Activated naive CD4-positive, alpha-beta T cell treated with anti-CD3 and anti-CD28 coated beads for 36 hours (primary cell): ENCODE measurements at regions of chr14 and their contacts with region 1.

Region 1: GRCh38 chr14:24160850-24161804 is at the start of gene IRF9:
- DNase-seq: peak; percentile 99
- H3K4me3 Mint-ChIP-seq: peak within 1 kb of the TSS; percentile 99
- H3K27ac Mint-ChIP-seq: peak within 1 kb of the TSS; percentile 100
- H3K4me1 Mint-ChIP-seq: peaks cover 43% of the 10 kb centered on the region
- H3K27me3 Mint-ChIP-seq: no peaks in the 10 kb centered on the region
- total RNA-seq, gene IRF9: 202 to 212 TPM

Region 2: GRCh38 chr14:23984891-23985602 is 176.1 kb before region 1 on chr14:
- CTCF ChIA-PET with region 1: interaction called, 3 read pairs
- intact Hi-C with region 1: loop called (anchors 1 kb)
- DNase-seq: no peak
- H3K4me3 Mint-ChIP-seq: no peak overlapping the region
- H3K27ac Mint-ChIP-seq: no peak overlapping the region
- H3K4me1 Mint-ChIP-seq: peaks cover 26% of the 10 kb centered on the region
- H3K27me3 Mint-ChIP-seq: no peaks in the 10 kb centered on the region

Region 3: DNA sequence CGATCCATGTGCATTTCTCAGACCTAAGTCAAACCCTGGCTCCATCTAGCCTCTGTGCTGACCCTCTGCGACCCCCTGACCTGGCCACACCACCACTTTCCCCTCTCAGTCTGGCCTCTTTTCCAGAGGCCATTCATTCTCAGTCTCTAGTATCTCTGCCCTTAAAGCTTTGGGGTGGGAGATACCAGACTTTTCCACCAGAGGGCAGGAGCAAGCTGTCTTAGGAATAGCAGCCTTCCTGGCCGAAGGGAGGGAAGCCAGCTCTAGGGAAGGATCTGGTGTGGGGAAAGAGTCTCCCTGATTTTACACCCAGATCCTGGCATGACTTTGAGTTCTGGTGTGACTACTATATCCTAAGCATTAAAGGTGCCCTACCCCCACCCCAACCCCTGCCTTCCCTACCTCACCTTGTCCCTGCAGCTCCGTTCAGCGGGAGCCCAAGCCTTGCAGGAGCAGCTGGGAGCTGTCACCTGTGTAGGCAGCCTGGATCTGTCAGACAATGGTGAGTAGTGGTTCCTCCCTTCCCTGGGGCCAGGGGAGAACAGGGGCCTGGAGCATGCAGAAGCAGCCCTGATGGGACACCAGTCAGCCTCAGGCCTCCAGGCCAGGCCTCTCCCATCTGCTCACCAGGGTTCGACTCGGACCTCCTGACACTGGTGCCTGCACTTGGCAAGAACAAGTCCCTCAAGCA is 102.7 kb before region 1 on chr14:
- CTCF ChIA-PET with region 1: interaction called, 25 read pairs
- intact Hi-C with region 1: loop called (anchors 1 kb)
- DNase-seq: peak; percentile 89
- H3K4me3 Mint-ChIP-seq: no peak overlapping the region
- H3K27ac Mint-ChIP-seq: peak overlapping the region; percentile 38
- H3K4me1 Mint-ChIP-seq: peaks cover 5% of the 10 kb centered on the region
- H3K27me3 Mint-ChIP-seq: peaks cover 2% of the 10 kb centered on the region

Region 4: DNA sequence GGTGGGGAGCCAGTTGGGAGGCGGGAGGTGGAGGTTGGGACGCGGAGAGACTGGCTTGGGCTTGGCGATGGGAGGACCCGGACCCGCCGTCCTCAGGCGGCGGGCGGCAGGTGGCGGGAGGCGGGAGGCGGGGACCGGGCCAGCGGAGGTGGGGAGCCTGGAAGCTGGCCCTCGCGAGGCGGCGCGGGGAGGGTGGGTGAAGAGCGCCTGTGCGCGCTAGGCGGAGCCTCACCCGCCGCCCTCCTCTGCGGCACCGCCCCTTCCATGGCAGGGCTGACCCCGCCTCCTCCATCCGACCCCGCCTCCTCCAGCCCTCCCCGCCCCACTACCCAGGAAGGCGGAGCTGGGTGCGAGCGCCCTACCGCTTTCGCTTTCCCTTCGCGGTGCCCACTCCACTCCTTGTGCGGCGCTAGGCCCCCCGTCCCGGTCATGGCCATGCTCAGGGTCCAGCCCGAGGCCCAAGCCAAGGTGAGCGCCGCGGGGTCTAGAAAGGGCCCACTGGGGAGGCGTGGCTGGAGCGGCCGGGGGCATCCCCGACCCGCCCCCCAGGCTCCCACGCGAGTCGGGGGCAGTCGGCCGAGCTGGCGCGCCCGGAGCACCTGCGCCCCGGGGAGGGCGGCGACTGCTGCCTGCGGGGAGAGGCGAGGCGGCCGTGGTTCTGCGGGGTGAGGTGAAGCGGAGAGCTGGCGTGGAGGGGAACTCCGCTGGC is 25.1 kb before region 1 on chr14 and contains the start of gene PSME1:
- CTCF ChIA-PET with region 1: interaction called, 22 read pairs
- intact Hi-C with region 1: loop called (anchors 1 kb)
- DNase-seq: peak; percentile 97
- H3K4me3 Mint-ChIP-seq: peak within 1 kb of the TSS; percentile 86
- H3K27ac Mint-ChIP-seq: peak within 1 kb of the TSS; percentile 93
- H3K4me1 Mint-ChIP-seq: peaks cover 52% of the 10 kb centered on the region
- H3K27me3 Mint-ChIP-seq: no peaks in the 10 kb centered on the region
- total RNA-seq, gene PSME1: 406 to 416 TPM

Region 5: DNA sequence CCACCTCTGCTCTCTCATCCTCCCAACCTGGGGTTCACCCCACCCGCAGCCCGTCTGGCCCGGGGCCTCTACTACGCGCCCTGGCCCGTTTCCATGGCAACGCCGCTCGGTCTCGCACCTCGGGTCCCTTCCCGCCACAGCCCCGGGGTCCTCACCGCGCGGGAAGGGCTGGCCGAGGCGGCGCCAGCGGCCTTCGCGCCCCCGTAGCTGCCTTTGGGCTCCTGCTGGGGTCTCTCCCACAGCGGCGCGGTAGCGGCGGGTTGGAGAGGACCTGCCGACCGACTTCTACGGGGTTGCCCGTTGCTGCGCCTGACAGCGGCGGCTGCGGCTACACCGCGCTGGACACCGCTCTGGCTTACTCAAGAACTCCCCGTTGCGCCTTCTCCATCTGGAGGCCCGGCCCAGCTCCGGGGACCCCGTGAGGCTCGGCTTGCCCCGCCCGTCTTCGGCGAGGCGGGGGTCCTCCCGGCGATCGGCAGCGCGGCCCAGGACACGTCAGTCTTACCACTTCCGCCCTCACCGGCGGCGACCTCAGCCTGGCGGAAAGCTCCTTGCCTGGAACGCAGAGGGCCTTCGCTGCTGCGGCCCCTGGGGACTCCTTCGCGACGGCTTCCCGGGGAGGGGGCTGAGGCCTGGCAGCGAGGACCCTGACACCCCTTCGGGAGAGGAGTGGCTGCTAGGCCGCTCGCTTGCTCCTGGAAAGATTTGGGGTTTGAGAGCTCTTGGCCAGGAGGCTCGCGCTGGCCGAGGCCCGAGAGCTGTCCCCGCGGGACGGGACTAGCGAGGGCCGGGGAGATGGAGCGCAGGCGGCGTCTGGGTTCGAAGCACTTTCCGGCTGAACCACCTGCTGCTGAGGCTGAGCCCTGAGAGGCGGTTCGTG is 34.3 kb after region 1 on chr14 and contains the start of gene TM9SF1:
- CTCF ChIA-PET with region 1: no interaction called
- intact Hi-C with region 1: loop called (anchors 1 kb)
- DNase-seq: peak; percentile 89
- H3K4me3 Mint-ChIP-seq: peak within 1 kb of the TSS; percentile 96
- H3K27ac Mint-ChIP-seq: peak within 1 kb of the TSS; percentile 93
- H3K4me1 Mint-ChIP-seq: peaks cover 56% of the 10 kb centered on the region
- H3K27me3 Mint-ChIP-seq: no peaks in the 10 kb centered on the region
- total RNA-seq, gene TM9SF1: 14.7 to 15.1 TPM

Region 6: DNA sequence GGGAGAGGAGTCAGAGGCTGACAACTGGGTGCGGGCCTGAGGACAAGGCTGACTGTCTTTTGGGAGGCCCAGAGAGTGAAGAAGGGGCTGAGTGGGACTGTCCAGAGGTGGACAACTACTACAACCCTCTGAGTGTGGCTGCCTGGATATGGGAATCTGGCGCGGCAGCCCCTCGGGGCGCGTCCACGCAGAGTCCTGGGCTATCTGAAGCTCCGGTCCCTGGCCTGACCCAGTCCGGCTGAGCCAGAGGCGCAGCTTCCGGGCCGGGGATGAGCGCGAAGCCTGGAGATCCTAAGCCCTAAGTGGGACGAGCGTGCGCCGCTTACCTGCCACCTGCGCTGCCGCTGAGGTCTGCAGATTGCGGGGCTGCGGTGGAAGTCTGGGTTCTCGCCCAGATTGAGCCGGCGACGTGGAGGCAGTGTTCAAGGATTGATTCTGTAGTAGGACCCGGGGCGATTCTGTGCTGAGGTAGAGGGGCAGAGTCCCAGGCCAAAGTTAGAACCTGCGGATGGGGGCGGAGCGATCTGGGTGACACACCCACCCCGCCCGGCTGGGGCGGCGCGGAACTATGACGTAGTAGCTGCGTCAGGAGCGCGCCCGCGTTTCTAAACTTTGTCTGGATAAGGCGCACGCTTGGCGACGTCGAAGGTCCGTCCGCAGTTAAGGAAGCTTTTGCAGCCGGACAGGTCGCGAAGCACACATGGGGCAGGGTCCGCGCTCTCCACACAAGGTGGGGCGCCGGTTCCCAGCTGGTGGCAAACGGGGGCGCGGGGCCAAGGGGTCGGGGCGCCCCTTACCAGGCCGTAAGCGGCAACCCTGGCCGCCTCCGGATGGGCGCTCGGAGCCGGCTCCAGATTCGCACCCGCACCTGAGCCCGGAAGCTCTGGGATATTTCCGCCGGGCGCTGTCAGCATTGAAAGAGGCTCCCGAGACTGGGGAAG is 138.4 kb after region 1 on chr14 and contains the starts of genes DHRS1 and NOP9:
- CTCF ChIA-PET with region 1: interaction called, 6 read pairs
- intact Hi-C with region 1: loop called (anchors 1 kb)
- DNase-seq: peak; percentile 94
- H3K4me3 Mint-ChIP-seq: peak within 1 kb of the TSS; percentile 87
- H3K27ac Mint-ChIP-seq: peak within 1 kb of the TSS; percentile 89
- H3K4me1 Mint-ChIP-seq: peaks cover 47% of the 10 kb centered on the region
- H3K27me3 Mint-ChIP-seq: no peaks in the 10 kb centered on the region
- total RNA-seq, gene DHRS1: 11.8 to 13.8 TPM
- total RNA-seq, gene NOP9: 24.8 to 26.4 TPM